Right cardiac atrium (tissue), 5 donors: ENCODE measurements at regions of chr10 and their contacts with region 1.

Region 1: DNA sequence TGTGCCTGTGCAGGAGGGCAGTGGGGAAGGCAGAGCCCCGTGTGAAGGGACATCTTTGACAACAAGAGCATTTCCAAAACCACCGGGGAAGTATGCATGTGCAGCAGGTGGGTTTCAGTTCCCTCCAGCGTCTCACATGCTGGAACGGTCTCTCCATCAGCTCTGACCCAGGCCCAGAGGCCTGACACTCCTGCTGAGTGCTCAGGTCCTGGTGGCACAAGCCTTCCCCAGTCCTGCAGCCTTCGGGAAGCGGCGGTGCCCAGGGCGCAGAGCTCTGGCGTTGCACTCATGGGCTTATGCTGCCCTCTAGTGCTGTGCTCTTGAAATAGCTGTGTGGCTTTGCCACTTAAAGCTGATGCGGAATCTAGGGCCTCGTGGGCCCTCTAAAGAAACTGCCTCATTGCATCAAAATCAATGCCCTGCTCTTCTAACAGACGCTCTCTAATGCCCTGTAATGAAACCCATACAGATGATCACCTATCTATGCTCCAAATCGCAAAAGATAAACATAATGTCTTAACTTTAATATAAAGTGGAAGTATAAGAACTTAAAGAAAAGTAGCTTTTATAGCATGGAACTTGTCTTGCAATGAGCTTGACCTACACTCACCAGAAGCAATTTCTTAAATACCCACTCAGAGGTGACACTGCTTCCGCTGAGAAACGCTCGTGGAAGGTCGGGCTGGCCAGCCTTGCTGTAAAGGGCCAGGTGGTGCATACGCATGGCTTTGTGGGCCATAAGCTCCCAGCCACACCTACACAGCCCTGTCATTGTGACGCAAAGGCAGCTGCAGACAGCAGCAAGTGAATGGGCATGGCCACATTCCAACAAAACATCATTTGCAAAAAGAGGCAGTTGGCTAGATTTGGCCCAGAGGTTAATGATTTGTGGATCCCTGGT is 38.6 kb downstream of the CLRN3 start:
- DNase-seq: peak; percentile 59 to 83 (median 78)
- ATAC-seq: peak; percentile 89
- H3K4me3 ChIP-seq: no peak overlapping the region
- H3K27ac ChIP-seq: no peak overlapping the region
- H3K4me1 ChIP-seq: no peaks in the 10 kb centered on the region
- H3K27me3 ChIP-seq: no peaks in the 10 kb centered on the region

Region 2: DNA sequence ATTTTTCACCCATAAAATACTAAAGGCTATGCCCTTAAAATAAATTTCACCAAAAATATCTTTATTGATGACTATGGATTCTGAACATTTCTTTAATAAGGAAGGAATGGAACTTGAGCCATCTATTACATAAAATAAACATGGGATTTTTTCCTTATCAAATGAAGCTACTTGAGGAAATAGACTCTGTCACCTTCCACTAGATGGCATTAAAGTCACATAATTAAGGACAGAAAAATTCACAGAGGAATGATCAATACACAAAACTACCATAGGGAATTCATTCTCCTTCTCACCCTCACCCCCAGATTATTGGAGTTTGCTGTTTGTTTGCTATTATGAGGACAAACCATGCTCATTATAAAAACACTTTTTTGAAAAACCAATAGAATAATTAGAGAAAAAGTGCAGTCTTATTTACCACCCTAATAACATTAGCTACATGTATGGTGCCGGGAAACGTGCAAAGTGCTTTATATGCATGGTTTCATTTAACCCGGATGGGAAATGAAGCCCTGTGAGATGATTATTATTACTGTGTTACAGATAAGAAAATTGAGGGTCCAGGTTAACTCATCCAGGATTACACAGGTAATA is 138.2 kb before region 1 on chr10:
- intact Hi-C with region 1: loop called in 1 of 4 experiments (anchors 5 kb)
- DNase-seq: no peak
- ATAC-seq: no peak
- H3K4me3 ChIP-seq: no peak overlapping the region
- H3K27ac ChIP-seq: no peak overlapping the region
- H3K4me1 ChIP-seq: no peaks in the 10 kb centered on the region
- H3K27me3 ChIP-seq: no peaks in the 10 kb centered on the region

Region 3: GRCh38 chr10:127738512-127739424 is 115.3 kb before region 1 on chr10:
- intact Hi-C with region 1: loop called in 1 of 4 experiments (anchors 10 kb)
- DNase-seq: peak in 2 of 3 donors; percentile 29 to 45
- ATAC-seq: no peak
- H3K4me3 ChIP-seq: no peak overlapping the region
- H3K27ac ChIP-seq: no peak overlapping the region
- H3K4me1 ChIP-seq: no peaks in the 10 kb centered on the region
- H3K27me3 ChIP-seq: no peaks in the 10 kb centered on the region